ENCODE measurements at regions of chr1 and their contacts with region 1.

Region 1: DNA sequence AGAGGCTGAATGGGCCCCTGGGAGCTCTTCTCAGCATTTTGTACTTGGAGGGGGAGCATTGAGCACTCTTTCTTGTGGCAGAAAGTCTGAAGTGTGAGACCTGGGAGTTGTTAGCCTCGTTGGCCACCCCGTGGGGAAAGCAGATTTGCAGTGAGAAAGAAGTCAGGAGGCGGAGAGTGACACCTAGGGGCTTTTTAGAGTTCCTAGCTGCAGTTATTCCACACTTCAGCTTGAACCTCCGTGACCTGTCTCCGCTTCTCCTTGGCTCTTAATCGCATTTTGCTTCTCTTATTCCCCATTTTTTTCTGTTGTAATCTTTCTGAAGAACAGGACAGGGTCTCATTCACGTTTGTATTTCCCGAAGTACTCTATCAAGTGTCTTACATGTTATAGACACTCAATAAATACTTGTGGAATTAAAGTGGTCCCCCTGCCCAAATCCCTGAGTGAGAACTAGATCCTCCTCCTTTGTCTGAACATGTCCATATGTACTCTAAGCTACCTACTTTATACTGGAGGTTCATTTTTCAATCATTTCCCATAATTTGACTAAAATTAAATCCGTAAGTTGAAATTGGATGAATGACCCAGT is 14.5 kb upstream of the C1orf141 start:
- DNase-seq: peak; percentile 82
- ATAC-seq: peak; percentile 91
- H3K4me3 ChIP-seq: no peak overlapping the region
- H3K4me3 Mint-ChIP-seq: no peak overlapping the region
- H3K27ac ChIP-seq: no peak overlapping the region
- H3K27ac Mint-ChIP-seq: peak overlapping the region; percentile 43
- H3K4me1 ChIP-seq: peaks cover 7 to 9% of the 10 kb centered on the region in 2 donors
- H3K4me1 Mint-ChIP-seq: peaks cover 9% of the 10 kb centered on the region
- H3K27me3 ChIP-seq: no peaks in the 10 kb centered on the region
- H3K27me3 Mint-ChIP-seq: peaks cover 16% of the 10 kb centered on the region
- CTCF ChIP-seq: peak; percentile 83

Region 2: GRCh38 chr1:66758241-66758755 is 391.0 kb before region 1 on chr1:
- CTCF ChIA-PET with region 1: interaction called, 146 read pairs
- POLR2A ChIA-PET with region 1: no interaction called
- intact Hi-C with region 1: no loop called
- DNase-seq: peak; percentile 49
- ATAC-seq: peak; percentile 47
- H3K4me3 ChIP-seq: no peak overlapping the region
- H3K4me3 Mint-ChIP-seq: no peak overlapping the region
- H3K27ac ChIP-seq: peak overlapping the region in 1 of 2 donors; percentile 3
- H3K27ac Mint-ChIP-seq: peak overlapping the region; percentile 26
- H3K4me1 ChIP-seq: peaks cover 10 to 11% of the 10 kb centered on the region in 2 donors
- H3K4me1 Mint-ChIP-seq: peaks cover 12% of the 10 kb centered on the region
- H3K27me3 ChIP-seq: peaks cover 0 to 7% (median 0%) of the 10 kb centered on the region in 4 experiments
- H3K27me3 Mint-ChIP-seq: peaks cover 7% of the 10 kb centered on the region
- CTCF ChIP-seq: no peak

Region 3: GRCh38 chr1:66809736-66810326 is 339.4 kb before region 1 on chr1:
- CTCF ChIA-PET with region 1: no interaction called
- POLR2A ChIA-PET with region 1: no interaction called
- intact Hi-C with region 1: no loop called
- DNase-seq: no peak
- ATAC-seq: no peak
- H3K4me3 ChIP-seq: no peak overlapping the region
- H3K4me3 Mint-ChIP-seq: no peak overlapping the region
- H3K27ac ChIP-seq: no peak overlapping the region
- H3K27ac Mint-ChIP-seq: no peak overlapping the region
- H3K4me1 ChIP-seq: no peaks in the 10 kb centered on the region
- H3K4me1 Mint-ChIP-seq: no peaks in the 10 kb centered on the region
- H3K27me3 ChIP-seq: no peaks in the 10 kb centered on the region
- H3K27me3 Mint-ChIP-seq: peaks cover 9% of the 10 kb centered on the region
- CTCF ChIP-seq: no peak

Region 4: GRCh38 chr1:66929999-66930822 is 219.1 kb before region 1 on chr1:
- CTCF ChIA-PET with region 1: interaction called, 3 read pairs
- POLR2A ChIA-PET with region 1: no interaction called
- intact Hi-C with region 1: loop called (anchors 2 kb)
- DNase-seq: peak; percentile 96
- ATAC-seq: peak; percentile 77
- H3K4me3 ChIP-seq: peak overlapping the region; percentile 79 to 92 (median 86)
- H3K4me3 Mint-ChIP-seq: peak overlapping the region; percentile 94
- H3K27ac ChIP-seq: peak overlapping the region; percentile 82 to 95
- H3K27ac Mint-ChIP-seq: peak overlapping the region; percentile 93
- H3K4me1 ChIP-seq: peaks cover 29 to 46% of the 10 kb centered on the region in 2 donors
- H3K4me1 Mint-ChIP-seq: peaks cover 53% of the 10 kb centered on the region
- H3K27me3 ChIP-seq: no peaks in the 10 kb centered on the region
- H3K27me3 Mint-ChIP-seq: no peaks in the 10 kb centered on the region
- CTCF ChIP-seq: peak; percentile 37

Region 5: GRCh38 chr1:66996018-66996682 is 153.1 kb before region 1 on chr1:
- CTCF ChIA-PET with region 1: interaction called, 266 read pairs
- POLR2A ChIA-PET with region 1: interaction called, 7 read pairs
- intact Hi-C with region 1: loop called (anchors 1 kb)
- DNase-seq: peak; percentile 79
- ATAC-seq: peak; percentile 78
- H3K4me3 ChIP-seq: no peak overlapping the region
- H3K4me3 Mint-ChIP-seq: no peak overlapping the region
- H3K27ac ChIP-seq: no peak overlapping the region
- H3K27ac Mint-ChIP-seq: no peak overlapping the region
- H3K4me1 ChIP-seq: peaks cover 3 to 4% of the 10 kb centered on the region in 2 donors
- H3K4me1 Mint-ChIP-seq: peaks cover 8% of the 10 kb centered on the region
- H3K27me3 ChIP-seq: no peaks in the 10 kb centered on the region
- H3K27me3 Mint-ChIP-seq: no peaks in the 10 kb centered on the region
- CTCF ChIP-seq: peak; percentile 77

Region 6: DNA sequence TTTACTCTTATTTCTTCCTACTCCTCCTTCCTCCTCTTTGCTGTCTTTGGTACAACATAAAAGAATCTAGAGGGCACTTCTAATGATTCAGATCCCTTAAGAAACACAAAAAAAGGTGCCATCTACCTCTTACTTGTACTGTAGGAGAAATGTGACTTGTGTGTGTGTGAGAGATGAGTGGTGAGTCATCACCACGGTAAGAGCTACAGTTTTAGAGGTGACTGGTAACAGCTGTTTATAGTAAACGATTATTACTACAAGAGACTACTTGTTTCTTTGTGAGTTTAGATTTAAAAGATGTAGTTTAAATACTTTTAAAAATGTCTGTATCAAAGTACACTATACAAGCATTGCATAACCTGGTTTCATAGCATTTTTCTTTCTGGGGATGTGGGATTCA is 135.7 kb before region 1 on chr1:
- CTCF ChIA-PET with region 1: interaction called, 12 read pairs
- POLR2A ChIA-PET with region 1: no interaction called
- intact Hi-C with region 1: no loop called
- DNase-seq: no peak
- ATAC-seq: no peak
- H3K4me3 ChIP-seq: no peak overlapping the region
- H3K4me3 Mint-ChIP-seq: no peak overlapping the region
- H3K27ac ChIP-seq: no peak overlapping the region
- H3K27ac Mint-ChIP-seq: no peak overlapping the region
- H3K4me1 ChIP-seq: no peaks in the 10 kb centered on the region
- H3K4me1 Mint-ChIP-seq: no peaks in the 10 kb centered on the region
- H3K27me3 ChIP-seq: no peaks in the 10 kb centered on the region
- H3K27me3 Mint-ChIP-seq: no peaks in the 10 kb centered on the region
- CTCF ChIP-seq: no peak

Region 7: GRCh38 chr1:67053785-67054772 is 95.2 kb before region 1 on chr1 and contains the start of gene SLC35D1:
- CTCF ChIA-PET with region 1: interaction called, 34 read pairs
- POLR2A ChIA-PET with region 1: no interaction called
- intact Hi-C with region 1: loop called (anchors 1 kb)
- DNase-seq: peak; percentile 93
- ATAC-seq: peak; percentile 88
- H3K4me3 ChIP-seq: peak within 1 kb of the TSS; percentile 68 to 78 (median 77)
- H3K4me3 Mint-ChIP-seq: peak within 1 kb of the TSS; percentile 90
- H3K27ac ChIP-seq: peak within 1 kb of the TSS; percentile 84 to 88
- H3K27ac Mint-ChIP-seq: peak within 1 kb of the TSS; percentile 95
- H3K4me1 ChIP-seq: peaks cover 11 to 15% of the 10 kb centered on the region in 2 donors
- H3K4me1 Mint-ChIP-seq: peaks cover 26% of the 10 kb centered on the region
- H3K27me3 ChIP-seq: no peaks in the 10 kb centered on the region
- H3K27me3 Mint-ChIP-seq: no peaks in the 10 kb centered on the region
- CTCF ChIP-seq: no peak
- total RNA-seq, gene SLC35D1: 16.8 and 17.1 TPM in 2 replicates

Region 8: DNA sequence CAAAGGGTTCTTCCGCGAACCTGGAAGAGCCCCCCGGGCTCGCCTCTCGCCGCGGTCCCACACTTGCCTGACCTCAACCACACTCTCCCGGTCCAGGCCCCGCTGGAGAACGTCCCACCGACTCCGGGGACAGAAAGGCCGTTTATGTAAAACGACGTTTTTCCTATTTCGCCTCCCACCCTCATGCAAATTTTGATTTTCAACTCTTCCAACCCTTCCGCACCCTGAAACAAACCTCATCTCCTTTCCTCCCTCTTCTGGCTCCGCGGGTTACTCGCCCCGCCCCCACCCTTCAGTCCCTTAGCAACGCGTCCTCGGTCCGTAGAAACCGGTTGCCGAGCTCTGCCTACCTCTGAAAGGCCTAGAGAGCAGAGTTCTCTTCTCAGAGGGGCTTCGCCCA is 14.6 kb before region 1 on chr1 and contains the start of gene C1orf141:
- CTCF ChIA-PET with region 1: interaction called, 16 read pairs
- POLR2A ChIA-PET with region 1: no interaction called
- intact Hi-C with region 1: no loop called
- DNase-seq: peak; percentile 51
- ATAC-seq: peak; percentile 39
- H3K4me3 ChIP-seq: peak within 1 kb of the TSS in 4 of 5 experiments; percentile 16 to 65 (median 39)
- H3K4me3 Mint-ChIP-seq: peak within 1 kb of the TSS; percentile 71
- H3K27ac ChIP-seq: no peak within 1 kb of the TSS
- H3K27ac Mint-ChIP-seq: no peak within 1 kb of the TSS
- H3K4me1 ChIP-seq: peaks cover 6 to 8% of the 10 kb centered on the region in 2 donors
- H3K4me1 Mint-ChIP-seq: peaks cover 6% of the 10 kb centered on the region
- H3K27me3 ChIP-seq: peaks cover 0 to 10% (median 2%) of the 10 kb centered on the region in 4 experiments
- H3K27me3 Mint-ChIP-seq: peaks cover 3% of the 10 kb centered on the region
- CTCF ChIP-seq: no peak
- total RNA-seq, gene C1orf141: not detected in 2 replicates

Region 9: GRCh38 chr1:67861856-67862516 is 712.7 kb after region 1 on chr1:
- CTCF ChIA-PET with region 1: no interaction called
- POLR2A ChIA-PET with region 1: no interaction called
- intact Hi-C with region 1: no loop called
- DNase-seq: no peak
- ATAC-seq: no peak
- H3K4me3 ChIP-seq: no peak overlapping the region
- H3K4me3 Mint-ChIP-seq: no peak overlapping the region
- H3K27ac ChIP-seq: no peak overlapping the region
- H3K27ac Mint-ChIP-seq: no peak overlapping the region
- H3K4me1 ChIP-seq: no peaks in the 10 kb centered on the region
- H3K4me1 Mint-ChIP-seq: no peaks in the 10 kb centered on the region
- H3K27me3 ChIP-seq: peaks cover 0 to 6% (median 0%) of the 10 kb centered on the region in 4 experiments
- H3K27me3 Mint-ChIP-seq: peaks cover 32% of the 10 kb centered on the region
- CTCF ChIP-seq: no peak

Measured in B cell (primary cell).